Dorsolateral prefrontal cortex (tissue), 120 donors: ENCODE measurements at regions of chr2 and their contacts with region 1.

Region 1: GRCh38 chr2:191942090-191942738 is 95.3 kb upstream of the CAVIN2 start:
- DNase-seq: no peak
- H3K4me3 ChIP-seq: peak overlapping the region in 1 of 59 donors; percentile 23
- H3K27ac ChIP-seq: peak overlapping the region in 14 of 59 donors; percentile 1 to 44 (median 20)
- H3K27me3 ChIP-seq: no peaks in the 10 kb centered on the region
- CTCF ChIP-seq: no peak

Region 2: GRCh38 chr2:191927319-191927867 is 14.8 kb before region 1 on chr2:
- intact Hi-C with region 1: loop called in 1 of 2 experiments (anchors 2 kb)
- DNase-seq: peak in 1 of 10 donors; percentile 17
- H3K4me3 ChIP-seq: no peak overlapping the region
- H3K27ac ChIP-seq: no peak overlapping the region
- H3K27me3 ChIP-seq: no peaks in the 10 kb centered on the region
- CTCF ChIP-seq: no peak